ENCODE measurements at regions of chr7 and their contacts with region 1.

Region 1: GRCh38 chr7:130010689-130011412 is 40.3 kb downstream of the ZC3HC1 start:
- DNase-seq: peak; percentile 74
- ATAC-seq: peak; percentile 91
- H3K4me3 Mint-ChIP-seq: no peak overlapping the region
- H3K27ac Mint-ChIP-seq: no peak overlapping the region
- H3K4me1 Mint-ChIP-seq: peaks cover 9% of the 10 kb centered on the region
- H3K27me3 Mint-ChIP-seq: no peaks in the 10 kb centered on the region
- CTCF ChIP-seq: peak; percentile 51

Region 2: GRCh38 chr7:129664029-129665012 is 346.5 kb before region 1 on chr7:
- CTCF ChIA-PET with region 1: interaction called, 4 read pairs
- POLR2A ChIA-PET with region 1: no interaction called
- intact Hi-C with region 1: loop called (anchors 1 kb)
- DNase-seq: no peak
- ATAC-seq: no peak
- H3K4me3 Mint-ChIP-seq: no peak overlapping the region
- H3K27ac Mint-ChIP-seq: no peak overlapping the region
- H3K4me1 Mint-ChIP-seq: no peaks in the 10 kb centered on the region
- H3K27me3 Mint-ChIP-seq: no peaks in the 10 kb centered on the region
- CTCF ChIP-seq: no peak

Region 3: GRCh38 chr7:129728875-129729467 is 281.9 kb before region 1 on chr7:
- CTCF ChIA-PET with region 1: no interaction called
- POLR2A ChIA-PET with region 1: no interaction called
- intact Hi-C with region 1: loop called (anchors 5 kb)
- DNase-seq: no peak
- ATAC-seq: no peak
- H3K4me3 Mint-ChIP-seq: no peak overlapping the region
- H3K27ac Mint-ChIP-seq: no peak overlapping the region
- H3K4me1 Mint-ChIP-seq: no peaks in the 10 kb centered on the region
- H3K27me3 Mint-ChIP-seq: no peaks in the 10 kb centered on the region
- CTCF ChIP-seq: no peak

Region 4: DNA sequence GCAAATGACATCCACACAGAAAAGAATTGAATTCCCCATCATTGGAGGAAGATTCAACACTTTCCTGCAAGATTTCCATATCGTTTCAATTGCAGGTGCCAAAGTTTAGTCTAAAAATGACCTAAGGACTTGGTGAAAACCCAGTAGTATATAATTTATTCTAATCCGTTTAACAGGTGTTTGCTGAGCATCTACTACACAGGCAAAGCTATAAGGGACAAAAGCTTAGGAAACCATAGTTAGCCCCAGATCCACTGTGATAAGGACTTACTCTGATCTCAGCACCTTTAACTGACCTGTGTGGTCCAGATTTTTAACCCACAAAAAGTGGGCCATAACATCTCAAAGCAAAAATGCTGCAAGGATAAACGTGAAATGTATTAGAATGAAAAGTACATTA is 77.2 kb before region 1 on chr7:
- CTCF ChIA-PET with region 1: interaction called, 3 read pairs
- POLR2A ChIA-PET with region 1: interaction called, 4 read pairs
- intact Hi-C with region 1: loop called (anchors 1 kb)
- DNase-seq: no peak
- ATAC-seq: no peak
- H3K4me3 Mint-ChIP-seq: no peak overlapping the region
- H3K27ac Mint-ChIP-seq: peak overlapping the region; percentile 74
- H3K4me1 Mint-ChIP-seq: peaks cover 21% of the 10 kb centered on the region
- H3K27me3 Mint-ChIP-seq: no peaks in the 10 kb centered on the region
- CTCF ChIP-seq: no peak

Region 5: DNA sequence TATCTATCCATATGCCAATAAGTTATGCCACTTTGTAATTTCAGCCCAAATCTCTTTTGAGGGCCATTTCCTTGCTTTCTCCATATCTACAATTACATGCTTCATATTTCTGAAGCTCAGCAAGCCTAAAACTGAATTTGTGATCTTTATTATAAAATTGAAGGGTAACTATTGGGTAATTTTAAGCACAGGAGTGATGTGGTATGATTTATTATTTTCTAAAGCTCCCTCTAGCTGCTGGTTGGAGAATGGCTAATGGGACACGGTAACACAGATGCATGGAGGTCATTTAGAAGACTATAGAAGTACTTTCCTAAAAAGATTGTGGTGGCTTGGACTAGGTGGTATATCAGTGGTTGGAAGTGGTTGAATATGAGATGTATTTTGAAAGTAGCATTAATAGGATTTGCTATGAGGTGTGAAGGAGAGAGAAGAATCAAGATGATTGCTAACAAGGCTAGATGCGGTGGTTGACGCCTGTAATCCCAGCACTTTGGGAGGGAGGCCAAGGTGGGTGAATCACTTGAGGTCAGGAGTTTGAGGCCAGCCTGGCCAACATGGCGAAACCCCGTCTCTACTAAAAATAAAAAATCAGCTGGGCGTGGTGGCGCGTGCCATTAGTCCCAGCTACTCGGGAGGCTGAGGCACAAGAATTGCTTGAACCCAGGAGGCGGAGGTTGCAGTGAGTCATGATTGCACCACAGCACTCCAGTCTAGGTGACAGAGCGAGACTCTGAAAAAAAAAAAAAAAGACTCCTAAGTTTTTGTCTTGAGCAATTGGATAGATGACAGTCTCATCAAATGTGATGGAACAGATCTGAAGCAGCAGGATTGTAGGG is 73.4 kb after region 1 on chr7:
- CTCF ChIA-PET with region 1: no interaction called
- POLR2A ChIA-PET with region 1: no interaction called
- intact Hi-C with region 1: no loop called
- DNase-seq: no peak
- ATAC-seq: no peak
- H3K4me3 Mint-ChIP-seq: no peak overlapping the region
- H3K27ac Mint-ChIP-seq: no peak overlapping the region
- H3K4me1 Mint-ChIP-seq: peaks cover 20% of the 10 kb centered on the region
- H3K27me3 Mint-ChIP-seq: no peaks in the 10 kb centered on the region
- CTCF ChIP-seq: no peak

Measured in activated B cell treated with CpG ODN at 0.5 μM for 24 hours (primary cell).